ENCODE measurements at regions of chr19 and their contacts with region 1.

Region 1: DNA sequence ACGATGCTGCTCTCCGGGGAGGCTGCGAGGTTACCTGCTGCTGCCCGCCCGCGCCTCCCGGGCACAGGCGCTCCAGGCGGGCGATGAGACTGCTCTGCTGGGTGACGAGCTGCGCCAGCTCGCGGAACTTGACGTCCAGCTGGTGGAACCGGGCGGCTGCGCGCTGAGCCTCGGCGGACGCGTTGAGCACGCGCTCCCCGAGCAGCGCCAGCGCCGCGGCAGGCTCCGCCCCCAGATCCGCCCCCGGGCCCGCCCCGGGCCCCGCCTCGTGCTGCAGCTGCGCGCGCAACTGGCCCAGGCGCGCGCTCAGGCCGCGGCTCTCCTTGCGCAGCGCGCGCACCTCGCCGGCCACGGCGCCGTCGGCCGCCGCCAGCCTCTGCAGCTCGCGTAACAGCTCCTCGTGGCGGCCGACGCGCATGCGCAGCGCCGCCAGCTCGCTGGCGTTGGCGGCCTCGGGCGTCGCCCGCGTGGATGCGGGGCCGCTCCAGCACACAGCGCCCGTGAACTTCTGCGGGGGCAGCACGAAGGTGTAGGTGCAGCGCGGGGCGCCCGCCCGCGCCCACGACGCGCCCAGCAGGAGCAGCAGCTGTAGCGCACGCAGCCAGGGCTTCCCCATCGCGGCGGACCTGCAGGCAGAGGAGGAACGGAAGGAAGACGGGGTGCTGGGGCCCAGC is 6.4 kb downstream of the ANGPTL6 start:
- DNase-seq: peak; percentile 99
- ATAC-seq: peak; percentile 92
- H3K4me3 ChIP-seq: peak overlapping the region; percentile 40
- H3K27ac ChIP-seq: no peak overlapping the region
- H3K4me1 ChIP-seq: peaks cover 11% of the 10 kb centered on the region
- H3K27me3 ChIP-seq: no peaks in the 10 kb centered on the region
- CTCF ChIP-seq: no peak

Region 2: GRCh38 chr19:9565900-9566705 is 530.0 kb before region 1 on chr19:
- CTCF ChIA-PET with region 1: interaction called, 17 read pairs
- POLR2A ChIA-PET with region 1: no interaction called
- intact Hi-C with region 1: no loop called
- DNase-seq: peak; percentile 16
- ATAC-seq: no peak
- H3K4me3 ChIP-seq: peak overlapping the region; percentile 46; the same call in 1 of the 2 replicates
- H3K27ac ChIP-seq: no peak overlapping the region
- H3K4me1 ChIP-seq: no peaks in the 10 kb centered on the region
- H3K27me3 ChIP-seq: no peaks in the 10 kb centered on the region; the same call in 1 of the 2 replicates
- CTCF ChIP-seq: no peak

Region 3: GRCh38 chr19:10061717-10062310 is 34.3 kb before region 1 on chr19:
- CTCF ChIA-PET with region 1: no interaction called
- POLR2A ChIA-PET with region 1: no interaction called
- intact Hi-C with region 1: no loop called
- DNase-seq: no peak
- ATAC-seq: no peak
- H3K4me3 ChIP-seq: no peak overlapping the region
- H3K27ac ChIP-seq: no peak overlapping the region
- H3K4me1 ChIP-seq: no peaks in the 10 kb centered on the region
- H3K27me3 ChIP-seq: peaks cover 16% of the 10 kb centered on the region; the same call in 1 of the 2 replicates
- CTCF ChIP-seq: no peak

Measured in PC-3 (cell line).